ENCODE measurements at regions of chr15 and their contacts with region 1.

Region 1: DNA sequence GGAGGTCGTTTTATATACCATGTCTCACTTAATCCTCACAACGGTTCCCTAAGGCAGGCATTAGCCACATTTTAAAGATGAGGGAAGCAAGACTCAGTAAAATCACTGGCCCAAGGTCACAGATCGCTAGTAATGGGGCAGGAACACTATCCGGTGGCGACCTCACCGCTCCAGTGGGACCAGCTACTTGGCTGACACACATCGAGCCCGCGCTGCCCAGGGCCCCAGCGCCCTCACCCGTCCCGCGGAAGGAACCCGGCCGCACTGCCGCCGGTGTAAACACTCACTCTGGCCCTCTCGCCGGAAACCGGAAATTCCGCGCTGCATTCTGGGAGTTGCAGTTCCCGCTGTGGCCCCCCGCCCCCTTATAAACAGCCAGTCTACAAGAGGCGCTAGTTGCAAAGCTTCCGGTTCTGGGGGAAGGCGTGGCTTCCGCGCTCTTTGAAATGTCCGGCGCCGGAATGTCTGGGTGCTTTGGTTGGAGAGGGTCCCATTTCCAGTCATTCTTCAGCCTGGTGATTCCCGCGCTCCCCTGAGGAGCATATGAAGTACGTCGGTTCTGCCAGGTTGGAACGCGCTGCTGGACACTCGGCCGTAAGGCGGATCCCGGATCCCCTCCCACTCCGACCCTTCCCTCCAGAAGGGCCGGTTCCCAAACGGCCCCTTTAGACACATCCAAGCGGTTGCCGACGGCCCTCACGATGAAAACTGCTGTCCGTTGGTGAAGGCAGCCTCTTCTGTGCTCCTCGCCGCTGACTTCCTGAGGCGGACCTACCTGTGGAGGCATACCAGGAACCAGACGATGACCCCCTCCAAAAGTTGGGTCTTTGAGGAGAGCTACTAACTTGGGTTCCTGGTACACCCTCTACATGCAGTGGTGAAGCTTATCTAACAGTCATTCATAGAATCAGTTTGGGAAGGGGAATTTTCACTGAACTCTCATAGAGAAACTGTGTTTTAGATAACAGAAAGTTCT is at the start of gene UBL7:
- DNase-seq: peak; percentile 99
- H3K4me3 Mint-ChIP-seq: peak within 1 kb of the TSS; percentile 98
- H3K27ac Mint-ChIP-seq: peak within 1 kb of the TSS; percentile 99
- H3K4me1 Mint-ChIP-seq: peaks cover 47% of the 10 kb centered on the region
- H3K27me3 Mint-ChIP-seq: no peaks in the 10 kb centered on the region
- total RNA-seq, gene UBL7: 52.3 to 58.2 TPM

Region 2: DNA sequence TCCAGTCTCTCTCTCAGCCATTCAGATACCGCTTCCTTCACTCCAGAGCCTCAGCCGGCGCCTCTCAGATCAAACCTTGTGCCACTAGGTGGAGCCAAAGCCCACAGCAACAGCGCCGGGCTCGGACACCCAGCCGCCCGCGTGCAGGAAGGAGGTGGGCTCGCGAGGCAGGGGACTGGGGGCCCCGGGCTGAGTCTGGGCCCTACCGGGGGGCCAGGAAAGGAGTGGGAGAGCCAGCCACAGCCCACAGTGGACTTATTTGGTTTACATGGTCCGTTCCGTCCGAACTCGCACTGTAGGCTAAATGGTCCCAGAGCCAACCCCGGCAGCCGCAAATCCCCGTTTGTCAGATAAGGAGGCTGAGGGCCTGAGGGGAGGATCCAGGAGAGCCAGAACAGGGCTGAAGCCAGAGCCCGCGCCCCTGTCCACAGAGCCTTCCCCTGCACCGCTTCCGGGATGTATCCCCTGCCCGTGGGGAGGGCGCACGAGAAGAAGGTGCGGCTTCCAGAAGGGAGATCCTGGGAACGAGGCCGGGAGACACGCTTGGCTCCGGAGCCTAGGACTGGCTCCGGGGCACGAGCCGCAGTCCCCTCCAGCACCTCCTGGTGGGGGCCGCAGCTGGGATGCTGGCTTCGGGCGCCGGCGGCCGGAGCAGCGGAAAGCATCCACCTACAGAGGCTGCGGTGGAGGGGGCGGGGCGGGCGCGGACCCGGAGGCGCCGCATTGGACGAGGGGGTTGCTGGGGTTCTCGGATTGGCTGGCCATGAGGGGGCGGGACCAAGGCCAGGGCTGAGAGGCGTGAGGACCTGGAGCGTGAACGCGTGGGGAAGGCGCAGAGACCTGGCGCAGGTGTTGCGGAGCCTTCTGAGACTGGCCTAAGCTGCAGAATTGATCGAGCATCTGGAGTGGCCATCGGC is 87.2 kb before region 1 on chr15:
- CTCF ChIA-PET with region 1: interaction called, 13 read pairs
- POLR2A ChIA-PET with region 1: interaction called, 5 read pairs
- intact Hi-C with region 1: loop called (anchors 2 kb)
- DNase-seq: peak; percentile 97
- H3K4me3 Mint-ChIP-seq: peak overlapping the region; percentile 71
- H3K27ac Mint-ChIP-seq: peak overlapping the region; percentile 35
- H3K4me1 Mint-ChIP-seq: peaks cover 24% of the 10 kb centered on the region
- H3K27me3 Mint-ChIP-seq: peaks cover 3% of the 10 kb centered on the region

Region 3: DNA sequence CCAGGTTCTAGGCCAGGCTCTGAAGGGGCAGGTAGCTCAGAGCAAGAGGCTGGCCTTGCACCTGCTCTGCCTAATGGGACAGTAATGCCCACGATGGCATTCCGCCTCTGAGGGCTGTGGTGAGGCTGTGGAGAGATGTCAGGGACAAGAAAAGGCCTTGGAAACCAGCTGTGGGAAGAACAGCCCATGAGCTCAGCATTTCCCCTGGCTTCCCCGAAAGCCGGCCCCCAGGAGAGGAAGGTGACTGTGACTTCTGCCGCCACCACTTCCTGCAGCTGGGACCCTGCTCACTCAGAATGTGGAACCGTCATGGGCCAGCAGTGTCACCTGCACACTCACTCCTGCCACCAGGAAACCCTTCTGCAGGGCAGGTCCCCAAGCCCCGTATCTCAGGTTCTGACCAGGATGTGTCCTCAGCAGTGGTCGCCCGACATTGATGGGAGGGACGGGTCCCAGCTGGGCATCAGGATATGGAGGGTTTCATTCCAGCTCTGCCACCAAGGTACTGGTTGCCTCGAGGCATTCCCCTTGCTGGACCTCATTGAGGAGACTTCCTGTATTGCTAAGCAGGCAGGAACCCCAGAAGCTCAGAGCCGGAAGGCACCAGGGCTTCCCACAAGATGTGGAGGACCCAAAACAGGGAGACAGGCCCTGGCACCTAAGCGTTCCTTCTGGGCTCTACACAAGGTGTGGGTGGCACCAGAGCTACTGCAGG is 58.1 kb before region 1 on chr15:
- CTCF ChIA-PET with region 1: no interaction called
- POLR2A ChIA-PET with region 1: interaction called, 17 read pairs
- intact Hi-C with region 1: loop called (anchors 2 kb)
- DNase-seq: peak; percentile 95
- H3K4me3 Mint-ChIP-seq: peak overlapping the region; percentile 28
- H3K27ac Mint-ChIP-seq: peak overlapping the region; percentile 85
- H3K4me1 Mint-ChIP-seq: peaks cover 73% of the 10 kb centered on the region
- H3K27me3 Mint-ChIP-seq: no peaks in the 10 kb centered on the region

Region 4: DNA sequence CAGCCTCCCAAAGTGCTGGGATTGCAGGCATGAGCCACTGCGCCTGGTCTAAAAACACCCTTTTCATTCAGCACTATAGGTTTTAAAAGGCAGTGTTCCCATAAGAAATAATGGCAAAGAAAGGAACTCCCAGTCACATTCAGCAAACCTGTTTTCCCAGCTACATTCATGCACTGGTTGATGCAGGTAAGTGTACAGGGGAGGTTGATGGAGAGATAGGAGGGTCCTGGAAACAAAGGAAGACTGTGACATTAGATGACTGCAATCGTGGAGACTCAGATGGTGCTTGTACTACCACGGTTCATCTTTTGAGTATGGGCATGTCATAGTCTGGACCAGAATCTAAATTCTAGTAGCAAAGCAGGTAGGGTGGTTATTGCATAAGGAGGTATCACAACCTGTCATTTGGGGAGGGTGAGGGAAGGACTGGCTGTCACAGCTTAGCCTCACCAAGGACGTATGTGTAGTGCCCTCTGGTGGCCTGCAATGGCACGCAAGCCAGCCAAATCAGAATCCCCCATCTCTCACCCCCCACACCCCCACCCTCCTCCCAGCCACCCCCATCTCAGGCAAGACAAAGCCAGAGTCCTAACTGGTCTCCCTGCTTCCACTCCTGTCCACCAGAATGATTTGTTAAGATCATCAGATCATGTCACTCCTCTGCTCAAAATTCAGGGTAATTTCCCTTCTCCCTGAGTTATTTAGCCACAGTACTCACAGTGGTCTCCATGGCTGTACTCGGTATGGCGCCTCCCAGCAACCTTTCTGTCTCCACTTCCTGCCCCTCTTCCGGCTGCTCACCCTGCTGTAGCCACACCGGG is 28.6 kb after region 1 on chr15:
- CTCF ChIA-PET with region 1: interaction called, 5 read pairs
- POLR2A ChIA-PET with region 1: no interaction called
- intact Hi-C with region 1: loop called (anchors 2 kb)
- DNase-seq: peak; percentile 80
- H3K4me3 Mint-ChIP-seq: no peak overlapping the region
- H3K27ac Mint-ChIP-seq: no peak overlapping the region
- H3K4me1 Mint-ChIP-seq: peaks cover 10% of the 10 kb centered on the region
- H3K27me3 Mint-ChIP-seq: no peaks in the 10 kb centered on the region

Region 5: DNA sequence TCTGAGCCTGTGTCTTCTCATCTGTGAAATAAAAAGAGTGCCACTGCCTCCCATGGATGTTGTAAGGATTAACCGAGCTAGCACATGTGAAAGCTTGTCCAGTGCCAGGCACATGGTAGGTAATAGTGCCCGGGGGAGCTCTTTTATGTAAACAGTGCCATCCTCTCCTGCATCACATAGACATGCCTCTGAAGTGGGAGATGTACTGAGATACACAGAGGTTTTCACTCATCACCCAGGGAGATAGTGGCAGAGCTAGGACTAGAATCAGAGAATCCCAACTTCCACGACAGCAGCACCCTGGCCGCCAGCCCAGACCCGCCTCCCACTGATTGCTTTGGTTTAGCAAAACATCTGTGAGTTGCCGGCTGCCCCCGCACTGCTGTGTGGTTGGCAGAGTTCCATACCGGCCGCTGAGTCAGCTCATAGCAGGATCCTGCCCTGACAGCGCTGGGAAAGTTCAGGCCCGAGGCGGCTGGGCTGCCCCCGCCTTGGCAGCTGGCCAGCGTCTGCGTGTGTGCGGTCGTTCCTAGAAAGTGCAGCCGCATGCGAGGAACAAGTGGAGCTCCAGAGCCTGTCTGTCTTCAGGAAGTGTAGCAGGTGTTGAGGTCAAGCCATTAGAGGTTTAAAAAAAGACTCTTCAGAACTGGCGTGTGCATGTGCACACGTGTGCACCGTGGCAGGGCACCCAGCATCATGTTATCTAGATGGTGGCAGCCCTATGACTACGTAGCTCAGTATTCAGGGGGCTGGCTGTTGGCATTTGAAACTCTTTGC is 84.9 kb after region 1 on chr15:
- CTCF ChIA-PET with region 1: interaction called, 10 read pairs
- POLR2A ChIA-PET with region 1: interaction called, 19 read pairs
- intact Hi-C with region 1: loop called (anchors 2 kb)
- DNase-seq: peak; percentile 99
- H3K4me3 Mint-ChIP-seq: peak overlapping the region; percentile 49
- H3K27ac Mint-ChIP-seq: peak overlapping the region; percentile 62
- H3K4me1 Mint-ChIP-seq: peaks cover 74% of the 10 kb centered on the region
- H3K27me3 Mint-ChIP-seq: no peaks in the 10 kb centered on the region

Region 6: DNA sequence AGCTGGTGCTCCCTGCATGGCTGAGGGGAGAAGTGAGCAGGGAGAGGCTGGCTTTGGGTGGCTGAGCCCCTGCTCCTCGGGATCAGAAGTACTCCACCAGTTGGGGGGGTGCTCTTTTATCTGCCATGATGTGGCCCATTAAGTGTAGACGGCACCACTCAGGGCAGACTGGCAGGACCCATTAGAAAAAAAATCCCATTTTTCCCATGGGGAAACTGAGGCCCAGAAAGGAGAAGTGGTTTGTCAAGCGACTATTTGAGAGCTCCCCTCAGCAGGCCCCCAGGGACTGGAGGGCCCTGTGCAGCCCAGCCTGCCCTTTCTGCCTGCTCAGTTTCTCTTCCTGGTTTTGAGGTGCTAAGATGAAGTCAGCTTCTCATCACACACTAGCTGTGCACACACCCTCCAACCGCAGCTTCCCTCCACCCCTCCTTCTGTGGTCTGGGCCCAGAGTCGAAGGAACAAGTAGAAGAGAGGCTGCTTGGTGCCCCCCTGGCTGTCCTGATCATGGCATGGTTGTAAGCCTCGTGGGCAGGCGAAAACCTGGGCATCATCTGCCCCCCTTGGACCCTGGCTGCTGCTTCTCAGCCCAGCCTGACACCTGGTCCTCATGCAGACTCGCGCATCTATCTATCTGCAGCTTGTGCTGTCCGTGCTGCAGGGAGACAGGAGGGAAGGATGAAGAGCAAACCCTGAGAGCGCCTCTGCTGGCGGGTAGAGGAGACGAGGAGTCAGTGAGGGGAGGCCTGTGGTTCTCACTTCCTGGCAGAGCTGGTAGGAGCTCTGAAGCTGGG is 326.3 kb after region 1 on chr15:
- CTCF ChIA-PET with region 1: no interaction called
- POLR2A ChIA-PET with region 1: no interaction called
- intact Hi-C with region 1: loop called (anchors 10 kb)
- DNase-seq: peak; percentile 97
- H3K4me3 Mint-ChIP-seq: peak overlapping the region; percentile 90
- H3K27ac Mint-ChIP-seq: peak overlapping the region; percentile 99
- H3K4me1 Mint-ChIP-seq: peaks cover 53% of the 10 kb centered on the region
- H3K27me3 Mint-ChIP-seq: no peaks in the 10 kb centered on the region

Measured in activated CD4-positive, alpha-beta memory T cell treated with anti-CD3 and anti-CD28 coated beads for 36 hours (primary cell).